K562 (cell line): ENCODE measurements at regions of chr1 and their contacts with region 1.

Region 1: GRCh38 chr1:11838349-11839272 is 9.0 kb downstream of the NPPA start:
- DNase-seq: peak; percentile 87 to 92 (median 89)
- ATAC-seq: peak; percentile 85
- H3K4me3 ChIP-seq: no peak overlapping the region
- H3K27ac ChIP-seq: no peak overlapping the region; the same call in 2 of the 3 replicates
- H3K4me1 ChIP-seq: peaks cover 29 to 47% of the 10 kb centered on the region in 2 experiments
- H3K27me3 ChIP-seq: no peaks in the 10 kb centered on the region
- CTCF ChIP-seq: peak; percentile 98 to 99 (median 99)
- EP300 ChIP-seq: no peak
- POLR2A ChIP-seq: no peak
- RAD21 ChIP-seq: peak; percentile 100

Region 2: DNA sequence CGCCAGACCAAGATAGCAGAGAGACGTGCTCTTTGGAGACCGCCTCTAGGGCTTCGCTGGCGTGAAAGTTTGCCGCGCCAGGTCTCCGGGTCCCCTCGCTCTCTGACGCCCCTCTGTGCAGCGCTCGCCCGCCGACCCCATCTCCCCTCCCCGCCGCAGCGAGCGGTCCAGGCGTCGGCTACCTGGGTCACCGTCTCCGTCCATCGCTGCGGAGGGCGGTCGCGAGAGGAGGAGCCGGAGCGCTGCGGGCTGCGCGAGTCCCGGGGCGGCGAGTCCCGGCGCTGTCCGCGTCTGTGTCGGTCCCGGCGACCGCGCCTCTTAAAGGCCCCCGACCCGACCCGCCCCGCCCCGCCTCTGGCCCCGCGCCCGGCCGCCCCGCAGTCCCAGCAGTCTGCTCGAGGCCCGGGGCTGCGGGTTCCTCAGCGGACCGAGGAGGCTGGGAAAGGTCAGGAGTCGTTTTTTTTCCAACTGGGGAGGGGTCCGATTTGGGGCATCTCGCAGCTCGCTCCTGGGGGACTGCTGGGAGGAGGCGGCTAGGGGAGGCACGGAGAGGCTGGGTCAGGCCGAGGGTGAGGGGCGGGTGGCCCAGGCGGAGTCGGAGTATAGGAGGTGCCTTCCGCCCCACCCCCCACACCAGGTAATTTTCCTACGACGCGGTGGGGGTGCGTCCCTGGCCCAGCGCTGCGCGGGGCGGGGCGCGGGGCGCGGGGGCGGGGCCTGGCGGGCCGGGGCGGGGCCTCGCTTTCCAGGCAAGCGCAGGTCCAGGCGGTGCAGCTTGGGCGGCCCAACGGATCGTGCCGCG is 184.3 kb before region 1 on chr1 and contains the starts of genes FBXO2 and FBXO44:
- CTCF ChIA-PET with region 1: no interaction called
- POLR2A ChIA-PET with region 1: no interaction called
- in situ Hi-C with region 1: no loop called
- intact Hi-C with region 1: no loop called
- DNase-seq: peak; percentile 58 to 87 (median 84)
- ATAC-seq: peak; percentile 78
- H3K4me3 ChIP-seq: peak within 1 kb of the TSS; percentile 48
- H3K27ac ChIP-seq: no peak within 1 kb of the TSS
- H3K4me1 ChIP-seq: peaks cover 13 to 49% of the 10 kb centered on the region in 2 experiments; a peak in 4 of 5 replicates
- H3K27me3 ChIP-seq: no peaks in the 10 kb centered on the region
- CTCF ChIP-seq: no peak
- EP300 ChIP-seq: no peak
- POLR2A ChIP-seq: no peak
- RAD21 ChIP-seq: no peak
- polyA plus RNA-seq, gene FBXO2: 0.04 to 0.27 TPM
- polyA plus RNA-seq, gene FBXO44: 0.69 to 1.3 TPM

Region 3: DNA sequence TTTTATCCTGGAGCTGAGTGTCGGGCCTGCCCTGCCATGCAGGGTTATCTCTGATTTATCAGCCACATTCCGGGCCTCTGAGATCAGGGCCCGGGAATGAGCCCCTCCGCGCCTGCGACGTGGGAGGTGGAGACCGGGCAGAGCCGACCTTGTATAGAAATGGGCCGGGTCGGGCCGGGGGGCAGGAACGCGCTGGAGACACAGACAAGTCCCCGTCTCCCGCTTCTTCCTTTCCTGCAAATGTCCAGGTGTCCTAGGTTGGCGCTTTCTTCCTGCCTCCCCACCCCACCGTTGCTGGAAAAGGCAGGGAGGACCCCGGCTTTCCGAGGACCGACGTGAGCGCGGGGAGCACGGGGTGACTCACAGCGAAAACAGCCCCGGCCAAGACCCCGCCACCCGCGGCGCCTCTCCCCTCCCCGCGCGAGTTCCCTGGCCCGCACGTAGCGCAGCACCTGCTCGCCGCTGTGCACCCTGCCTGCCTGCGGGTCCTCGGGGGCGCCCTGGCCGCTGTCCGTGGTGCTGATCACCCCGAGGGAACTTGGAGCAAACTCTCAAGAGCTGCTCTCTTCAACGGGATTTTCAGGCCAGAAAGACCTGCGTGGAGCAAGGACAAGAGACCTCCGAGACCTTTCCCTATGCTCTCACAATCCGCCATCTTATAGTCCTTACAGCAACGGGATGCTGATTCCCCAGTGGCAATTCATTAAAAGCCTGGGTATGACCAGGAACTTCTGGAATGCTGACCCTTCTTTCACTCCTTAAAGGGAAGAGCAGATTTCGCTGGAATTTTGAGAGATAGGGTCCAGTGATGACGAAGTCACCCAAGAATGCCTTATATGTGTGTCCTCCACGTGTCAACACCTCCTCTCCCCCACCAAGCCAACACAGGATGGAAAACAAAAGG is 20.6 kb after region 1 on chr1:
- CTCF ChIA-PET with region 1: no interaction called
- POLR2A ChIA-PET with region 1: interaction called, 3 read pairs
- in situ Hi-C with region 1: no loop called
- intact Hi-C with region 1: loop called (anchors 2 kb)
- DNase-seq: peak; percentile 89 to 97 (median 94)
- ATAC-seq: peak; percentile 99
- H3K4me3 ChIP-seq: no peak overlapping the region
- H3K27ac ChIP-seq: no peak overlapping the region
- H3K4me1 ChIP-seq: peaks cover 0 to 10% of the 10 kb centered on the region in 2 experiments; a peak in 2 of 5 replicates
- H3K27me3 ChIP-seq: peaks cover 40 to 45% of the 10 kb centered on the region in 2 experiments; a peak in 4 of 5 replicates
- CTCF ChIP-seq: peak; percentile 60 to 79 (median 69)
- EP300 ChIP-seq: no peak
- POLR2A ChIP-seq: no peak
- RAD21 ChIP-seq: peak in 1 of 2 experiments; percentile 46; a peak in 2 of 4 replicates

Region 4: GRCh38 chr1:11893907-11894251 is 55.3 kb after region 1 on chr1:
- CTCF ChIA-PET with region 1: interaction called, 93 read pairs
- POLR2A ChIA-PET with region 1: interaction called, 6 read pairs
- in situ Hi-C with region 1: loop called (anchors 5 kb)
- intact Hi-C with region 1: loop called (anchors 1 kb)
- DNase-seq: peak; percentile 88 to 94 (median 93)
- ATAC-seq: peak; percentile 98
- H3K4me3 ChIP-seq: no peak overlapping the region
- H3K27ac ChIP-seq: no peak overlapping the region
- H3K4me1 ChIP-seq: peaks cover 6 to 24% of the 10 kb centered on the region in 2 experiments; a peak in 4 of 5 replicates
- H3K27me3 ChIP-seq: peaks cover 8 to 9% of the 10 kb centered on the region in 2 experiments; a peak in 4 of 5 replicates
- CTCF ChIP-seq: peak; percentile 97 to 99 (median 98)
- EP300 ChIP-seq: no peak
- POLR2A ChIP-seq: no peak
- RAD21 ChIP-seq: peak; percentile 97 to 100

Region 5: DNA sequence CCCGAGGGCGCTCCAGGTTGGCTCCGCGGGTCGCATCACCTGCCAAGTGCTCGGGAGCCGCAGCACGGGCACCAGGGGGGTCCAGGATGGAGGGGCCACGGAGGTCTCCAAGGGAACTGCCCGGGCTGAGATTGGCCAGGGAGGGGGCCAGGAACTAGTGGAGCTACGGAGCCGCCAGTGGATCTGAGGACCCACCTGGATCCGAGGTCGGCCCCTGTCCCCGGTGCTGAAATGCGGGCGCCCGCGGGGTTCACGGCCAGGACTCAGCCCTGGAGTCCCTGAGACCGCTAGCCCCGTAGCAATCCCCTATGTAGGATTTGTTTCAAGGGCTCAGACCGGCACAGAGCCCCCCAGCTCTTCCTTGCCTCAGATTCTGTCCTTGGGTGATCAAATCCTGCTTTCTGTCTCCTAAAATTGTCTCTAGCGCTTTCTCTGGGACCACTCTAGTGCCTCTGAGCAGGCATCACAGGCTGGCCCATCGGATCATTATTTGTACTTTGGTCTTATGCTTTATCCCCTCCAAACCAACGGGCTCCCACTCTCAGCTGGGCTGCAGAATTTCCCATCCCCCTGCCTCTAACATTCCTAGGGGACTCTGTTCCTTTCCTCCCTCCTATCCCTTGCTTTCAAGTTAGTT is 60.3 kb after region 1 on chr1:
- CTCF ChIA-PET with region 1: interaction called, 93 read pairs
- POLR2A ChIA-PET with region 1: interaction called, 6 read pairs
- in situ Hi-C with region 1: loop called (anchors 5 kb)
- intact Hi-C with region 1: loop called (anchors 1 kb)
- DNase-seq: peak in 3 of 4 experiments; percentile 50 to 61 (median 59)
- ATAC-seq: peak; percentile 83
- H3K4me3 ChIP-seq: no peak overlapping the region
- H3K27ac ChIP-seq: no peak overlapping the region
- H3K4me1 ChIP-seq: peaks cover 0 to 10% of the 10 kb centered on the region in 2 experiments; a peak in 1 of 5 replicates
- H3K27me3 ChIP-seq: peaks cover 15 to 16% of the 10 kb centered on the region in 2 experiments
- CTCF ChIP-seq: no peak
- EP300 ChIP-seq: no peak
- POLR2A ChIP-seq: no peak
- RAD21 ChIP-seq: no peak

Region 6: GRCh38 chr1:11967028-11967547 is 128.5 kb after region 1 on chr1:
- CTCF ChIA-PET with region 1: interaction called, 19 read pairs
- POLR2A ChIA-PET with region 1: no interaction called
- in situ Hi-C with region 1: no loop called
- intact Hi-C with region 1: loop called (anchors 1 kb)
- DNase-seq: peak; percentile 50 to 77 (median 64)
- ATAC-seq: peak; percentile 95
- H3K4me3 ChIP-seq: no peak overlapping the region
- H3K27ac ChIP-seq: no peak overlapping the region
- H3K4me1 ChIP-seq: peaks cover 0 to 17% of the 10 kb centered on the region in 2 experiments; a peak in 2 of 5 replicates
- H3K27me3 ChIP-seq: no peaks in the 10 kb centered on the region
- CTCF ChIP-seq: peak; percentile 75 to 95 (median 92)
- EP300 ChIP-seq: no peak
- POLR2A ChIP-seq: no peak
- RAD21 ChIP-seq: peak; percentile 67 to 91

Region 7: DNA sequence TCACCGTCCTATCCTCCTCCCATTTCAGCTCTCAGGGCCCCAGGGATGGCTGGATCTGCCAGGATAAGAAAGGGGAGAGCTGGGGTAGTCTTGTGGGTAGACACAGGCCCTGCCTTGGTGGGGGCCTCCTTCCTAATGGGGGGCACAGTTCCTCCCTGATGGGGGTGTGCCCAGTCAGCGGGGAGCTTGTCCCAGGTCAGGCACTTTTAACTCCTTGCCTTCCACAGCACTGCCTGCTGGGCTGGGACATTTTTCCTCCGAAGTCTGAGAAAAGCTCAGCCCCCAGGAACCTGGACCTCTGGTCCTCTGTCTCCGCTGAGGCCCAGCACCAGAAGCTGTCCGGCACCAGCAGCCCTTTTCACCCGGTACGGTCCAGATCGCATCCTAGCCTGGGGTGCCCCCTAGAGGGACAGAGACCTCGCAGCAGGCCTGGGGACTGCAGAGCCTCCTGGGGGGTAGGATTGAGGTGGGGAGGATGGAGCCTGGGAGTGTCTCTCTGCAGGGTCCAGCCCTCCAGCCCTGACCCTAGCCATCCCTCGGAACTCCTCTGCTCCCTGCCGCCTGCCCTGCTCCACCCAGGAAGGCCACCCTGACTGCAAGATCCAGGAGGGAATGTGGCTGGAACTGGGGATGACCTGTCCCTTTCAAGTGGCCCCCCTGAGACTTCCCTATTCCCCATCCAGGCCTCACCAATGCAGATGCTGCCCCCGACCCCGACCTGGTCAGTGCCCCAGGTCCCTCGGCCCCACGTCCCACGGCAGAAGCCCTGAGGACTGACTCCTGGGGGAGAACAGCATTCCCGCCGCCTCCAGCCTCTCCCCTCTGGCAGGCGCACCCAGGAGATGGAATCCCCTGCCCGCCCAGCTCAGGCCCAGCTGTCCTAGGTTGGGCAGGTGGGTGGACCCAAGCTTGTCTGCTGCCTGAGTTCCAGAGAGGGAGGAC is 192.7 kb after region 1 on chr1:
- CTCF ChIA-PET with region 1: no interaction called
- POLR2A ChIA-PET with region 1: no interaction called
- in situ Hi-C with region 1: no loop called
- intact Hi-C with region 1: loop called (anchors 2 kb)
- DNase-seq: peak; percentile 70 to 83 (median 80)
- ATAC-seq: peak; percentile 94
- H3K4me3 ChIP-seq: no peak overlapping the region
- H3K27ac ChIP-seq: no peak overlapping the region
- H3K4me1 ChIP-seq: peaks cover 8 to 34% of the 10 kb centered on the region in 2 experiments; a peak in 4 of 5 replicates
- H3K27me3 ChIP-seq: no peaks in the 10 kb centered on the region
- CTCF ChIP-seq: peak; percentile 88 to 91 (median 89)
- EP300 ChIP-seq: no peak
- POLR2A ChIP-seq: no peak
- RAD21 ChIP-seq: peak; percentile 80 to 90